ENCODE measurements at regions of chr11 and their contacts with region 1.

Region 1: GRCh38 chr11:128725630-128726319 is 31.9 kb downstream of the FLI1 start:
- DNase-seq: peak; percentile 42
- ATAC-seq: peak; percentile 64
- H3K4me3 Mint-ChIP-seq: peak overlapping the region; percentile 83
- H3K27ac Mint-ChIP-seq: peak overlapping the region; percentile 98
- H3K4me1 Mint-ChIP-seq: peaks cover 98% of the 10 kb centered on the region
- H3K27me3 Mint-ChIP-seq: no peaks in the 10 kb centered on the region
- CTCF ChIP-seq: no peak

Region 2: DNA sequence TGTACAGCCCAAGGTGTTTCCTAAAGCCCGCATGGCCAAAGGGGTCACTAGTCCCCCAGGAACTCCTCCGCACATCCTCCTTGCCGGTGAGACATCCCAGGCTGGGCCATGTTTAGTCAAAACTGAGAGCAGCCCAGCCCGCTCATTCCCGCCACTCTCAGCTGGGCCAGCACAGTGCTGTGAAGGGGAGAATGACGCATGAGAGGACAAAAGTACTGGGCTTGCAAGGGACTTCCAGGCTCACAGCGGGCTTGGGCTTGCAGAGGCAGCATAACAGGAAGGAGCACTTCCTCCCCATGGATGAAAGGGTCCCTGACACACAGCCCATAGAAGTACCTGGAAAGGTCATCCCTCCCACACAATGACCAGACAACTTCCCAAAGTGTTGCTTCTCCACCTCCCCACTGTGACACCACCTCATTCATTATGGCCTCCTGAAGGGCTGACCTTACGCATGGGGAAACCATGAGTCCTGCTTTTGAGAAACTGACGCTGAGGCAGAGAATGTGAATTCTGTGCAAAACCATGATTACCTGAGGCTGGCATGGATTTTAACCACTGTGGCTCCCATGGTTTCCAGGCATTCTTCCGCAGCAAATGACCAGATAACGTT is 157.5 kb before region 1 on chr11:
- CTCF ChIA-PET with region 1: no interaction called
- POLR2A ChIA-PET with region 1: no interaction called
- intact Hi-C with region 1: no loop called
- DNase-seq: no peak
- ATAC-seq: no peak
- H3K4me3 Mint-ChIP-seq: no peak overlapping the region
- H3K27ac Mint-ChIP-seq: no peak overlapping the region
- H3K4me1 Mint-ChIP-seq: peaks cover 63% of the 10 kb centered on the region
- H3K27me3 Mint-ChIP-seq: no peaks in the 10 kb centered on the region
- CTCF ChIP-seq: no peak

Region 3: DNA sequence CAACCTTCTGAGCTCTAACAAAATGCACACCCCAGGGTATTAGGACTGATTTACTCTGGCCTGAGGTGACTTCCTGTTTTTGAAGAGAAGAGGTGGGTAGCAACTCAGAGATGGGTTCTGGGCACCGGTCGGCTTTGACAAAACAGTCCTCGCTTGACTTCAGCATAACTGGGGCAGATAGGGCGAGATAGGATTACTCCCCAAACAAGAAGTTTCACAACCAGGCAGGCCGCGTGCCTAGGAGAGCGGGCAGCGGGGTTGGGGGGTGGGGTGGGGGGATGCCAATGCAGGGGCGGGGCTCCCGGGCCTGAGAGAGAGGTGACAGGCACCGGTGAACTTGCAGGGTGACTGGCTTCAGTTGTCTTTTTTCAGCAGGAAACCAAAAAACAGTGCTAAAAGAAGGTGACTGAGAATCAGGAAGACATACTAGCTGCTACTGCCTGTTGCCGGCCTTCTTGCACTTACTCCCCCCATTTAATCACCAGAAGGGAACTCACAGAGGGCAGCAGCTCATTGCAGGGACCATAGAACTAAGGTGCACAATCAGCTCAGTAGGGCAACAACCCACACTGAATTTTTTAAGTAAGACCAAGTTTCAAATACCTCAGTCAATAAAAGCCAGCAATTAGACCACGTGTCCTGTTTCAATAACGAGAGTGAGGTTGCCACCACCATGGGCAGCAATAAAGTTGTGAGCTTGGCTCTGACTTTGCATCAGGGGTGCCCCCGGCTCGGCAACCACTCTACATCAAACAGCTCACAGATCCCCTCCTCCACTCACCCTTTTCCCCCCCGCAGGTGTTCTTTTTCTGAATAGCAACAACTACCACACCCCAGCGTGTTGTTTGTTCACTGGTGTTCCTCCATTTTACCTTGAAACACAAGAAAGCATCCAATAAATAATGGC is 101.3 kb before region 1 on chr11:
- CTCF ChIA-PET with region 1: no interaction called
- POLR2A ChIA-PET with region 1: no interaction called
- intact Hi-C with region 1: no loop called
- DNase-seq: peak; percentile 64
- ATAC-seq: peak; percentile 82
- H3K4me3 Mint-ChIP-seq: peak overlapping the region; percentile 74
- H3K27ac Mint-ChIP-seq: peak overlapping the region; percentile 99
- H3K4me1 Mint-ChIP-seq: peaks cover 99% of the 10 kb centered on the region
- H3K27me3 Mint-ChIP-seq: no peaks in the 10 kb centered on the region
- CTCF ChIP-seq: no peak

Region 4: DNA sequence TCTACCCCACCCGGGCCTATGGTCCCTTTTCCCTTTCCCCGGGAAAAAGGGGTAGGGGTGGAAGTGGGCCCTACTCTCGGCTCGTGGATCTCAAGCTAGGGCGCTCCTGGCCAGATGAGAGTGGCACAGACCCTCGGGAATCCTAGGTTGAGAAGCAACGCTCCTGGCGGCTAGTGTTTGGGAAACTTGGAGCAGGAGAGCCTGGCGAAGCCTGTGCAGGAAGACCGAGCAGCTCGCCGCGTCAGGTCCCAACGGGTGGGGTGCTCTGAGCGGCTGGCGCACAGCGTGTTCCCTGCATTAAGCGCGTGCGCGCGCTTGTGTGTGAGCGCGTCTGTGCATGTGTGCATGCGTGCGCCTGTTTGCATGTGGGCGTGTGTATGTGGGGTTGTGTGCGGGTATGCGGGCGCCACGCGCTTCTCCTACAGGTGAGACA is 39.0 kb before region 1 on chr11:
- CTCF ChIA-PET with region 1: no interaction called
- POLR2A ChIA-PET with region 1: interaction called, 11 read pairs
- intact Hi-C with region 1: no loop called
- DNase-seq: peak; percentile 41
- ATAC-seq: peak; percentile 63
- H3K4me3 Mint-ChIP-seq: peak overlapping the region; percentile 84
- H3K27ac Mint-ChIP-seq: no peak overlapping the region
- H3K4me1 Mint-ChIP-seq: peaks cover 45% of the 10 kb centered on the region
- H3K27me3 Mint-ChIP-seq: peaks cover 25% of the 10 kb centered on the region
- CTCF ChIP-seq: no peak

Region 5: GRCh38 chr11:128714881-128715280 is 10.9 kb before region 1 on chr11:
- CTCF ChIA-PET with region 1: interaction called, 3 read pairs
- POLR2A ChIA-PET with region 1: interaction called, 25 read pairs
- intact Hi-C with region 1: loop called (anchors 1 kb)
- DNase-seq: no peak
- ATAC-seq: no peak
- H3K4me3 Mint-ChIP-seq: no peak overlapping the region
- H3K27ac Mint-ChIP-seq: peak overlapping the region; percentile 98
- H3K4me1 Mint-ChIP-seq: peaks cover 97% of the 10 kb centered on the region
- H3K27me3 Mint-ChIP-seq: no peaks in the 10 kb centered on the region
- CTCF ChIP-seq: no peak

Region 6: DNA sequence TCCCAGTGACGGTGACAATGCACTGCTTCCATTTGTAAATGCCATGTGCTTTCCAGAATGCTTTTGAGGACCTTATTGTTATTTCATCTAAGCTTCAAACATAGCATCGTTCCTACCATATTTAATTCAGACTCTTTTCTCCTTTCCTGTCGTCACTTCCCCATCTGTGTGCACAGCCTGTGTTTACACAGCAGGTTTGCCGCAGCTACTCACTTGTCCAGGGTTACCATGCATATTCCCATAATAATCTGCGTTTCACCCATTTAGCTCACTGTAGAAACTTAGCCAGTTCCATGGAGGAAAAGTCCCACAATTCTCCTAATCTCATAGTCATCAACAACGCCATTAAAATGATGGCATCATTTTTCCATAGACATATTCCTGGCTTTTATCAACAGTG is 16.1 kb after region 1 on chr11:
- CTCF ChIA-PET with region 1: interaction called, 9 read pairs
- POLR2A ChIA-PET with region 1: interaction called, 79 read pairs
- intact Hi-C with region 1: loop called (anchors 2 kb)
- DNase-seq: no peak
- ATAC-seq: no peak
- H3K4me3 Mint-ChIP-seq: peak overlapping the region; percentile 47
- H3K27ac Mint-ChIP-seq: peak overlapping the region; percentile 80
- H3K4me1 Mint-ChIP-seq: peaks cover 89% of the 10 kb centered on the region
- H3K27me3 Mint-ChIP-seq: no peaks in the 10 kb centered on the region
- CTCF ChIP-seq: no peak